ENCODE measurements at regions of chr5 and their contacts with region 1.

Region 1: DNA sequence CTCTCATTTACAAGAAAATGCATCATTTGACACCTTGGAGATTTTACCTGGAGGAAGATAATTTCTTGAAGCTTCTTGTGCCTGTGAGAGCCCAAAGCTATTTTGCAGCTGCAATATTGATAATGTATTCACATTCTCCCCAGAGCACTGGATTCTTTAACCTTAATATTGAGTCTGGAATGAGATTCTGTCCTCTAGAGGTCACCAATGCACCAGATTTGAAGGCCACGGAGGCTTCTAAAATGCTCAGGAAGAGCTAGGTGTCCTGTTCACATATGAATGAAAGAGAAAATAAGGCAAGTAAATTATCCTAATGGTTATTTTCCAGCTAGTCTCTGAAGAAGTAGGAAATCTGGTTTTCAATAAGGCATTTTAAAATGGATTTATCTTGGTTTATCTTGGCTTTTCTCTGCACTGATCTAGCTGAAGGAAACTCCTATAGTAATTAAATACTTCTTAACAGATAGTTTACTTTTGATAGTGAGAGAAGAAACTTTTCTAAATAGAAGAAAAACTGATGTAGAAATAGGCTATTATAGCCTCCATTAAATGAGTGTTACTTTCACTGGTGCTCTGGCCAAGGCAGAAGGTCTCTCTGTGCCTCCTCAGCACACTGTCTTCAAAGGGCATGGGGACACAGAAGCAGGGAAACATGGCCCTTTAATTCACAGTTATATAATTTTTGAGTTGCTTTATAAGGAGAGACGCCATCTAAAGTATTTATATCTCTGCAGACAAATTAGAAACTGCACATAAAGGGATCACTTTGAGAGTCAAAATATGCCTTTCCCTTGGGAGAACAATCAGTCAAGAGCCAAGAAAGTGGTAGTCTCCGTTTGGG is 297.0 kb upstream of the ACTBL2 start:
- DNase-seq: peak; percentile 66
- H3K27ac ChIP-seq: peak overlapping the region; percentile 43; the same call in 1 of the 2 replicates
- CTCF ChIP-seq: peak; percentile 82

Region 2: DNA sequence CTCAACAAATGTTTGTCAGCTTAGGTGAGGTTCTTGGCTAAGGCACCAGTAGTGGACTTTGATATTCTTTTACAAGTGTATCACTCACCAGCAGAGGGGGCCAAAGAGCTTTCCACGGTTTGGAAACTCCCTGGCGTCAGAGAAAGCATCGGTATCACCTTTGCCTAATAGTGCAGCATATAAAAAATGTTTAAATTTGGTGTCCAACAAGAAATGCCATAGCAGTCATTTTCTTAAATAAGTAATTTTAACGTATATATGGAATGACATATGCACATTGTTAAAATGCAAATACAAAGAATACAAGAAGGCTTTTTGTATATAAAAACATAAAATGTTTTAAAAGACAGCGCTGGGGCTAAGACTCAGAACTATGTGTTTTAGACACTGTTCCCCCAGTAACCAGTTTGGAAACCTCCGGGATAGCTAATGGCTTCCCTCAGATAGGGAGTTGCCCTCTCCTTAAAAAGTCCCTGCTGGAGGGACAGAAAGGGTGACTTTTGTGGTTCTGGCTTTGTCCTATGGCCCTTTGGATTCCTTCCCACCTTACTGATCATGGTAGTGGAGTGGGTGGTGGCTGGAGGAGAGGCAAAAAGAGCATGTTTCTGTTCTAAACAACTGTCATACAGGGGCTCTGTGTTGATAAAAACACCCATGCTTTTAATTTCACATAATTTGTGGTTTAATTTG is 481.2 kb before region 1 on chr5:
- CTCF ChIA-PET with region 1: interaction called, 14 read pairs
- POLR2A ChIA-PET with region 1: no interaction called
- DNase-seq: peak; percentile 76
- H3K27ac ChIP-seq: no peak overlapping the region
- CTCF ChIP-seq: peak; percentile 92

Region 3: DNA sequence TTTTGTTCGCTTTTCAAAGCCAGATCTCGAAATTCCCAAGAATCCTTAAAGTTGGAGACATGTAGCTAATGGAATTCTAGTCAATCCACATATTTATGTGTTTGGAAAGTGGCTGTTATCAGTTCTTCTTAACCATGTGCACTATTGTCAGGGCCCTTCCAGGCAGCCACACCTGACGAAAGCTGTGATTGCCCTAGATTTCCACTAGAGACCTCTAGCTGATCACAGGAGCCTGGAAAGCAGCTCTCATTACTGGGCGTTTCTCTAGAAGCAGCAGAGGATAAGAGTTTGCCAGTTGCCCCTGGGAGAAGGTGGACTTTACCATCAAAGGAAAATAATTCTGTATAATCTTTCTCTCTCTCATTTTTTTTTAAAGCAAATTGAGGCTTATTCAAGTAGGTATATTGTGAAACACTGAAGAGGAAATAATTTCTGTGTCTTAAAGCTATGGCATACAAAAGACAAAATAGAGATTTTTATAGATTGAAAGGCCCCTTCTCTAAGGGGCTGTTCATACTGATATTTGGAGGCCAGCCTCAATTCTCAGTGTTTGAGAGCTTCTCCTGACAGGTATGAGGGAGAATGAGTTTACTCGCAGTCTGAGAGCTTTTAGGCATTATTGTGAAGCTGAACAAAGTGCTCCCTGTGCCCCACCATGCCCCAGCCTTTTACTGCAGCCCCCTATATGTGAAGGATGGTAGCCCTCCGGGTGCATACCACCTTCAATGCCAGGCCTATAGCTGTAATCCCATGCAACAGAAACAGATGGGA is 108.4 kb after region 1 on chr5:
- CTCF ChIA-PET with region 1: interaction called, 21 read pairs
- POLR2A ChIA-PET with region 1: no interaction called
- DNase-seq: peak; percentile 87
- H3K27ac ChIP-seq: peak overlapping the region; percentile 42; the same call in 1 of the 2 replicates
- CTCF ChIP-seq: peak; percentile 90

Region 4: GRCh38 chr5:58460732-58461286 is 681.2 kb after region 1 on chr5:
- CTCF ChIA-PET with region 1: interaction called, 17 read pairs
- POLR2A ChIA-PET with region 1: interaction called, 3 read pairs
- DNase-seq: peak; percentile 87
- H3K27ac ChIP-seq: peak overlapping the region; percentile 94
- CTCF ChIP-seq: peak; percentile 89

Measured in RWPE1 (cell line).